GM12878 (cell line): ENCODE measurements at regions of chr6 and their contacts with region 1.

Region 1: DNA sequence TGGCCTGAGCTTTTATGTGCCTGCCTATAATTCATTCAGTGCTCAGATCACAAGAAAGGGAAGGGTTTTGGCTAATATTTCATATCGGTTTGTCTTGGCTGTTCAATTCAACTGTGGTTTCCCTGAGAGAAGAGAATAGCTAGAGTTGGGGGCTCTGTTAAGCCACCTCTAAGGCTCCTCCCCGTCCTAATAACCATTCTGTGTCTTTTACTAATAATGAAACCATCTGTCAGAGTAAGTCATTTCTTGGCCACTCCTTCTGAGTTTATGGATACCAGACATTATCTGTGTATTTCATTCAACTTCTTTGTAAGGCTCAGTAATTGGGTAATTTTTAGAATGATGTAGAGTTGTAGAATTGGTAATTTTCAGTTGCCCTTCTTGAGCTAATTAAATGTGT is 5.2 kb downstream of the STX11 start:
- DNase-seq: no peak
- ATAC-seq: peak; percentile 63
- H3K4me3 ChIP-seq: peak overlapping the region; percentile 26
- H3K27ac ChIP-seq: peak overlapping the region; percentile 57
- H3K4me1 ChIP-seq: peaks cover 36% of the 10 kb centered on the region
- H3K27me3 ChIP-seq: no peaks in the 10 kb centered on the region
- CTCF ChIP-seq: no peak
- EP300 ChIP-seq: no peak
- POLR2A ChIP-seq: no peak
- RAD21 ChIP-seq: no peak

Region 2: GRCh38 chr6:144104898-144105487 is 50.5 kb before region 1 on chr6:
- CTCF ChIA-PET with region 1: interaction called, 5 read pairs
- POLR2A ChIA-PET with region 1: interaction called, 3 read pairs
- RAD21 ChIA-PET with region 1: interaction called, 5 read pairs
- SMC1A ChIA-PET with region 1: interaction called, 11 read pairs
- in situ Hi-C with region 1: no loop called
- intact Hi-C with region 1: loop called (anchors 1 kb)
- DNase-seq: peak; percentile 53
- ATAC-seq: peak; percentile 97
- H3K4me3 ChIP-seq: no peak overlapping the region
- H3K27ac ChIP-seq: no peak overlapping the region
- H3K4me1 ChIP-seq: no peaks in the 10 kb centered on the region
- H3K27me3 ChIP-seq: no peaks in the 10 kb centered on the region
- CTCF ChIP-seq: peak; percentile 59 to 89 (median 72)
- EP300 ChIP-seq: no peak
- POLR2A ChIP-seq: no peak
- RAD21 ChIP-seq: peak; percentile 99

Region 3: DNA sequence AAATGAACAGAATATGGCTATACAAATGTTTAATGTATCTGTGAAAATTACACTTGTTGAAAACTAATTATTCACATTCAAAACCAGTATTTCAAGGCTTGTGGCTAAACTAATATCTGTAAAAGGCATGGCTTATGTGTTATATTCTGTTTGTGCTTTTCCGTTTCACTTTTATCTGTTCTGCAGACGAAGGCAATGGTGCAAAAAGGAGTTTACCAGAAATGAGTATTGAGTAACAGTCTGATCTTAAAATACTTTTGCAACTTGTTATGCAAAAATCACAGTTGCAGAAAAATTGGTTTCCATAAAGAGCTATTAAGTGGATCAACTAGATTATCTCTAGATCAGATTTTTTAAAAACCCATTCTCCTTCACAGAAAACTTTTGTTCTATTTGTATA is 14.7 kb before region 1 on chr6:
- CTCF ChIA-PET with region 1: interaction called, 6 read pairs
- POLR2A ChIA-PET with region 1: interaction called, 6 read pairs
- RAD21 ChIA-PET with region 1: interaction called, 3 read pairs
- SMC1A ChIA-PET with region 1: interaction called, 21 read pairs
- in situ Hi-C with region 1: no loop called
- intact Hi-C with region 1: no loop called
- DNase-seq: no peak
- ATAC-seq: peak; percentile 84
- H3K4me3 ChIP-seq: peak overlapping the region; percentile 37; the same call in 1 of the 2 replicates
- H3K27ac ChIP-seq: peak overlapping the region; percentile 71
- H3K4me1 ChIP-seq: peaks cover 18% of the 10 kb centered on the region
- H3K27me3 ChIP-seq: no peaks in the 10 kb centered on the region
- CTCF ChIP-seq: no peak
- EP300 ChIP-seq: no peak
- POLR2A ChIP-seq: no peak
- RAD21 ChIP-seq: no peak

Region 4: DNA sequence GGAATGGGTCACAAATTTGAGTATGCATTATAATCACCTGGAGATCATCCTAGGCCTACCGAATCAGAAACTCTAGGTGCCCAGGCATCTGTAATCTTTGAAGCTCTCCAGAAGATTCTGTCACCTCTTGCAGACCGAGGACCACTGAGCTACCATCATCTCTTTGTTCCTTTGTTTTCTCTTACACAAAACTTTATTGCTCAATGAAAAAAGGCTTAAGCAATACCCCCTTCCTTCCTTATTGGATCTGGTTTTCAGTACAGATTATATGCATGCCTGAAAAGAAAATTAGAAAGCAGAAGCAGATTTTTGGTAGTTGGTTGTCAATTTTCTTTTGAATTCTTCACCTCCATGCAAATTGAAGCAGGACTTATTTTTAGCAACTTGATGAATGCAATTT is 26.1 kb after region 1 on chr6:
- CTCF ChIA-PET with region 1: interaction called, 17 read pairs
- POLR2A ChIA-PET with region 1: interaction called, 10 read pairs
- RAD21 ChIA-PET with region 1: interaction called, 3 read pairs
- SMC1A ChIA-PET with region 1: interaction called, 23 read pairs
- in situ Hi-C with region 1: no loop called
- intact Hi-C with region 1: no loop called
- DNase-seq: no peak
- ATAC-seq: no peak
- H3K4me3 ChIP-seq: no peak overlapping the region
- H3K27ac ChIP-seq: no peak overlapping the region
- H3K4me1 ChIP-seq: peaks cover 22% of the 10 kb centered on the region
- H3K27me3 ChIP-seq: no peaks in the 10 kb centered on the region
- CTCF ChIP-seq: no peak
- EP300 ChIP-seq: no peak
- POLR2A ChIP-seq: no peak
- RAD21 ChIP-seq: no peak

Region 5: GRCh38 chr6:144379356-144379755 is 223.8 kb after region 1 on chr6:
- CTCF ChIA-PET with region 1: no interaction called
- POLR2A ChIA-PET with region 1: no interaction called
- RAD21 ChIA-PET with region 1: no interaction called
- SMC1A ChIA-PET with region 1: no interaction called
- in situ Hi-C with region 1: no loop called
- intact Hi-C with region 1: no loop called
- DNase-seq: no peak
- ATAC-seq: peak; percentile 36
- H3K4me3 ChIP-seq: no peak overlapping the region
- H3K27ac ChIP-seq: no peak overlapping the region
- H3K4me1 ChIP-seq: no peaks in the 10 kb centered on the region
- H3K27me3 ChIP-seq: no peaks in the 10 kb centered on the region
- CTCF ChIP-seq: no peak
- EP300 ChIP-seq: no peak
- POLR2A ChIP-seq: no peak
- RAD21 ChIP-seq: no peak

Region 6: GRCh38 chr6:144394210-144394609 is 238.7 kb after region 1 on chr6:
- CTCF ChIA-PET with region 1: no interaction called
- POLR2A ChIA-PET with region 1: no interaction called
- RAD21 ChIA-PET with region 1: no interaction called
- SMC1A ChIA-PET with region 1: no interaction called
- in situ Hi-C with region 1: no loop called
- intact Hi-C with region 1: no loop called
- DNase-seq: no peak
- ATAC-seq: no peak
- H3K4me3 ChIP-seq: no peak overlapping the region
- H3K27ac ChIP-seq: no peak overlapping the region
- H3K4me1 ChIP-seq: no peaks in the 10 kb centered on the region
- H3K27me3 ChIP-seq: no peaks in the 10 kb centered on the region
- CTCF ChIP-seq: no peak
- EP300 ChIP-seq: no peak
- POLR2A ChIP-seq: no peak
- RAD21 ChIP-seq: no peak

Region 7: DNA sequence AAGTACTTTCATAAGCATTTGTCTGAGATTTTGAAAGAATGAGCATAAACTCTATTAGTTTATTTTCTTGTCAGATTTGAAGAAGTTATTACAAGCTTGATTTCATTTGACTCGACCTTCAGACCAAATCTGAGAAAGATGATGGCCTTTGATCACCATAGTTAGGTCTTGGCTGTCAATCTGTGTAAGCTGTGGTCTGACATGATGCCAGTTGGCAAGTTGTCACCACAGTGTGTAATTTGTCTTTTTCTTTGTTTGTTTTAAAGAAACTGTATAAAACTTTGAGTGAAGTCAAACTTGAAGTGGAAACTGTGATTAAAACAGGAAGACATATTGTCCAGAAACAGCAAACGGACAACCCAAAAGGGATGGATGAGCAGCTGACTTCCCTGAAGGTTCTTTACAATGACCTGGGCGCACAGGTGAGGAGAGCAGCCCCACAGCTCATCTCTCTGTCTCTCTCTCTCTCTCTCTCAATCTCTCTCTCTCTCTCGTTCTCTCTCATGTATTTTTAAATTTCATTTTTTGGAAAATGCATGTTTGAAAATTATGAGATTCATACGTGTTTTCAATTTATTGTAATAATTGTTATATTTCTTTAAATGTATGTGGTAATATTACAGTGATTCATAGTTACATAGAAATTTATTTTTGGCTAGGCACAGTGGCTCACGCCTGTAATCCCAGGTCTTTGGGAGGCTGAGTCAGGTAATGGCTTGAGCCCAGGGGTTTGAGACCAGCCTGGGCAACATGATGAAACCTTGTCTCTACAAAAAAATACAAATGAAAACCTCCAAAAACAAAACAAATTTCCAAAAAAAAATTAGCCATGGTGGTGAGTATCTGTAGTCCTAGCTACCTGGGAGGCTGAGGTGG is 337.7 kb after region 1 on chr6:
- CTCF ChIA-PET with region 1: no interaction called
- POLR2A ChIA-PET with region 1: no interaction called
- RAD21 ChIA-PET with region 1: no interaction called
- SMC1A ChIA-PET with region 1: no interaction called
- in situ Hi-C with region 1: no loop called
- intact Hi-C with region 1: no loop called
- DNase-seq: no peak
- ATAC-seq: no peak
- H3K4me3 ChIP-seq: no peak overlapping the region
- H3K27ac ChIP-seq: no peak overlapping the region
- H3K4me1 ChIP-seq: no peaks in the 10 kb centered on the region
- H3K27me3 ChIP-seq: no peaks in the 10 kb centered on the region
- CTCF ChIP-seq: no peak
- EP300 ChIP-seq: no peak
- POLR2A ChIP-seq: no peak
- RAD21 ChIP-seq: no peak